H1 (cell line): ENCODE measurements at regions of chr10 and their contacts with region 1.

Region 1: GRCh38 chr10:23525406-23525805 is 86.5 kb downstream of the OTUD1 start:
- DNase-seq: no peak
- H3K4me3 ChIP-seq: no peak overlapping the region
- H3K27ac ChIP-seq: no peak overlapping the region
- H3K4me1 ChIP-seq: no peaks in the 10 kb centered on the region
- H3K27me3 ChIP-seq: no peaks in the 10 kb centered on the region
- CTCF ChIP-seq: peak in 2 of 3 experiments; percentile 34 to 41; a peak in 2 of 4 replicates
- EP300 ChIP-seq: no peak
- POLR2A ChIP-seq: no peak
- RAD21 ChIP-seq: peak; percentile 61 to 69

Region 2: GRCh38 chr10:23540401-23541030 is 15.1 kb after region 1 on chr10:
- CTCF ChIA-PET with region 1: interaction called, 15 read pairs
- POLR2A ChIA-PET with region 1: no interaction called
- DNase-seq: no peak
- H3K4me3 ChIP-seq: no peak overlapping the region
- H3K27ac ChIP-seq: no peak overlapping the region
- H3K4me1 ChIP-seq: no peaks in the 10 kb centered on the region
- H3K27me3 ChIP-seq: no peaks in the 10 kb centered on the region
- CTCF ChIP-seq: no peak
- EP300 ChIP-seq: no peak
- POLR2A ChIP-seq: no peak
- RAD21 ChIP-seq: no peak

Region 3: DNA sequence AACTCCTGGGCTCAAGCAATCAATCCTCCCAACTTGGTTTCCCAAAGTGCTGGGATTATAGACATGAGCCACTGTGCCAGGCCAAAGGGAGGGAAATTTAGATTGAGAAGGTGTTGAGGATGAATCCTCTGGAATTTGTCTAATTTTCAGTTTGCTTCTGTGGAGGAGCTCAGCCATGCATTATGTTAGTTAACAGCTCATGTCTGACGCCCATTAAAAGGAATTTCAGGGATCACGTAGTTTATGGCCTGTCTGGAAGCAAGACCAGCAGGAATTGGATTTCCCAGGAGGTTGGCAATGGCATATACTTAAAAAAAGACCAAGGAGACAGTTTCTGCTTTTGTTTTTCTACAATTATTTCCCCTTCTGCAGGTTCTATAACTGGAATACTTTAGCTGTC is 79.2 kb after region 1 on chr10:
- CTCF ChIA-PET with region 1: no interaction called
- POLR2A ChIA-PET with region 1: no interaction called
- DNase-seq: no peak
- H3K4me3 ChIP-seq: no peak overlapping the region
- H3K27ac ChIP-seq: no peak overlapping the region
- H3K4me1 ChIP-seq: no peaks in the 10 kb centered on the region
- H3K27me3 ChIP-seq: no peaks in the 10 kb centered on the region
- CTCF ChIP-seq: no peak
- EP300 ChIP-seq: no peak
- POLR2A ChIP-seq: no peak
- RAD21 ChIP-seq: no peak

Region 4: DNA sequence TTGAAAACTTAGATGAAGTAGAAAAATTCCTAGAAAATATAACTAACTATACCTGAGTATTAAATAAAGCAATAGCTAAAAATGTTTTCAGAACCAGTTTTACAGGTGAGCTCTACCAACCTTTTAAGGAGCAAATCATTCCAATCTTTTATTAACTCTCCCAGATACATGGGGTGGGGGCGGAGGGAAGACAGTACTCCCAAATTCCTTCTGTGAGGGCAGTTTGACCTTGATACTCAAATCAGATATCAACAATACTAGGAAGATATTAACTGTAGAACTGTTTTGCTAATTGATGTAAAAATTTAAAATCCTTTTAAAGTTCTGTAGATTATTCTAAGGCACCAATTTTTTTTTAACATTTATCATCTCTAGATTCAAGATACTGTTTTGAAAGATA is 138.6 kb after region 1 on chr10:
- CTCF ChIA-PET with region 1: no interaction called
- POLR2A ChIA-PET with region 1: no interaction called
- DNase-seq: no peak
- H3K4me3 ChIP-seq: no peak overlapping the region
- H3K27ac ChIP-seq: no peak overlapping the region
- H3K4me1 ChIP-seq: no peaks in the 10 kb centered on the region
- H3K27me3 ChIP-seq: no peaks in the 10 kb centered on the region
- CTCF ChIP-seq: no peak
- EP300 ChIP-seq: no peak
- POLR2A ChIP-seq: no peak
- RAD21 ChIP-seq: no peak

Region 5: GRCh38 chr10:23694446-23694920 is 169.1 kb after region 1 on chr10:
- CTCF ChIA-PET with region 1: interaction called, 10 read pairs
- POLR2A ChIA-PET with region 1: no interaction called
- DNase-seq: peak in 1 of 2 experiments; percentile 84
- H3K4me3 ChIP-seq: peak overlapping the region; percentile 40 to 76 (median 54)
- H3K27ac ChIP-seq: no peak overlapping the region
- H3K4me1 ChIP-seq: peaks cover 1 to 11% (median 5%) of the 10 kb centered on the region in 4 experiments; a peak in 4 of 7 replicates
- H3K27me3 ChIP-seq: peaks cover 41 to 60% (median 51%) of the 10 kb centered on the region in 4 experiments
- CTCF ChIP-seq: peak in 1 of 3 experiments; percentile 4; a peak in 1 of 4 replicates
- EP300 ChIP-seq: no peak
- POLR2A ChIP-seq: no peak
- RAD21 ChIP-seq: peak; percentile 19; a peak in 2 of 4 replicates